ENCODE measurements at regions of chr15 and their contacts with region 1.

Region 1: GRCh38 chr15:40238532-40239403 is at the start of gene PAK6:
- DNase-seq: peak; percentile 86 to 91
- H3K4me3 ChIP-seq: peak within 1 kb of the TSS in 2 of 3 donors; percentile 48 to 60
- H3K27ac ChIP-seq: peak within 1 kb of the TSS; percentile 82 to 88
- H3K4me1 ChIP-seq: peaks cover 4 to 8% of the 10 kb centered on the region in 2 donors
- H3K27me3 ChIP-seq: no peaks in the 10 kb centered on the region
- CTCF ChIP-seq: no peak
- POLR2A ChIP-seq: no peak
- total RNA-seq, gene PAK6: 0.80 to 11.0 (median 9.5) TPM

Region 2: DNA sequence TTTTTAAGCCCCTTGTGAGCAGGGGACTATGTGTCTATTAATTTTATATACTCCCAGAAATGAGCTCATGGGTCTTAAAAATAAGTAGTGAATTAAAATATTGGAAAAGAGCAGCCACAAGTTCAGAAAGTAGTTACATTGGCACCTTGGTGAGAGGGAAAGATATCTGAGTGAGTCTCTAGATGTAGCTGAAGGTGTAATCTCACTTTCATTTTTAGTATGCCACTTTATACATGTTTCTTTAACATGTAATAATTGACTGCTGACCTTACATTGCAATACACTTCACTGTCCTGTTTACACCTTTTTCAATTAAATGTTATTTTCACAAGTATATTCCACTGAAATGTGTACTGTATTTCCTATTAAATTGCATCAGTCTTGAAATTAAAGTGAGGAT is 12.0 kb before region 1 on chr15:
- intact Hi-C with region 1: loop called (anchors 2 kb)
- DNase-seq: no peak
- H3K4me3 ChIP-seq: no peak overlapping the region
- H3K27ac ChIP-seq: no peak overlapping the region
- H3K4me1 ChIP-seq: no peaks in the 10 kb centered on the region
- H3K27me3 ChIP-seq: no peaks in the 10 kb centered on the region
- CTCF ChIP-seq: no peak
- POLR2A ChIP-seq: no peak

Region 3: GRCh38 chr15:40264321-40265153 is 25.8 kb after region 1 on chr15:
- intact Hi-C with region 1: no loop called
- DNase-seq: no peak
- H3K4me3 ChIP-seq: no peak overlapping the region
- H3K27ac ChIP-seq: no peak overlapping the region
- H3K4me1 ChIP-seq: no peaks in the 10 kb centered on the region
- H3K27me3 ChIP-seq: no peaks in the 10 kb centered on the region
- CTCF ChIP-seq: no peak
- POLR2A ChIP-seq: no peak

Region 4: DNA sequence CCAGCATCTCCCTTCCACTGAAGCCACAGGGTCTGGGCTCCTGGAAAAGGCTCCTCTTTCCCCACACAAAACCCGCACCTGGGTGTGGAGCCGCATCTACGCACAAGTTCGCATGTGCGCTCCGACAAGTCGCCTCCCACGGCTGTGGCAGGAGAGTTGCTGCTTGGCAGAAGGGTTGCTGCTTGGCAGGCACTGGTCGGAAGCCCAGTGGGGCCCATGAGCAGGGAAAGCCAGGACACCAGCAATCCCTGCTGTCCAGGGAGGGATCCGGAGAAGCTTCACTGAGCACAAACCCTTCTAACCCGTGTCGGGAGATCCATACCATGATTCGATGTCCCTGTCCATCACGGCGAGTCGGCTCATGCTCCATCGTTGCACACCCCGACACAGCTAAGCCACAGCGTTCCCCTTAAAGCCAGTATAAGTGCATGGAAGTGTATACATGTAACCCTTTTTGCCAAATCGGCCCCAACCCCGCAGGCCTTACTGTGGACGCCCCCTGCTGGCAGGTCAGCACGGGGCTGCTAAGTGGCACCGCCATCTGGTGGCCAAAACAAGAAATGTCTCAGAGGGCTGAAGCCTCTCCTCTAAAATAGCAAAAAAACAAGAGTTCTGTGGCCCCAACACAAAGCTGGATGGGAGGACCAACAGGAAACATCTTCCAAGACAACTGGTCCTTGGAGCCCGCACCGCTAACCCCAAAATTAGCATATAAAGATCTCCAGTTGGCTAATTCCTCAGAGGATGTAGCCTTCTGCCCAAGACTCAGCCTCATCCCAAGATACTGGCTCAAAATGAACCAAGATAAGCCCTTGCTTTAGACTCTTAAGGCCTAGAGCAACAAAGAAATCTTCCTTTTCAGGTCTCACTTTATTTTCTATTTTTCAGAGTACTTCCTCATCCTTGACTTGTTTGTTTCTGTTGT is 35.8 kb after region 1 on chr15:
- intact Hi-C with region 1: loop called (anchors 5 kb)
- DNase-seq: peak; percentile 61 to 84
- H3K4me3 ChIP-seq: no peak overlapping the region
- H3K27ac ChIP-seq: no peak overlapping the region
- H3K4me1 ChIP-seq: no peaks in the 10 kb centered on the region
- H3K27me3 ChIP-seq: peaks cover 0 to 1% of the 10 kb centered on the region in 2 donors
- CTCF ChIP-seq: peak; percentile 100
- POLR2A ChIP-seq: no peak

Measured in breast epithelium (tissue), 4 donors.